ENCODE measurements at regions of chr6 and their contacts with region 1.

Region 1: GRCh38 chr6:43013843-43014433 is at the starts of genes KLHDC3 and MEA1:
- DNase-seq: peak; percentile 94
- ATAC-seq: peak; percentile 93
- H3K4me3 Mint-ChIP-seq: peak within 1 kb of the TSS; percentile 97
- H3K27ac Mint-ChIP-seq: peak within 1 kb of the TSS; percentile 89
- H3K4me1 Mint-ChIP-seq: peaks cover 51% of the 10 kb centered on the region
- H3K27me3 Mint-ChIP-seq: no peaks in the 10 kb centered on the region
- CTCF ChIP-seq: no peak
- total RNA-seq, gene KLHDC3: 36.4 and 36.7 TPM in 2 replicates
- total RNA-seq, gene MEA1: 44.4 and 48.3 TPM in 2 replicates

Region 2: GRCh38 chr6:42726485-42727086 is 287.4 kb before region 1 on chr6:
- CTCF ChIA-PET with region 1: no interaction called
- POLR2A ChIA-PET with region 1: no interaction called
- intact Hi-C with region 1: loop called (anchors 5 kb)
- DNase-seq: no peak
- ATAC-seq: peak; percentile 98
- H3K4me3 Mint-ChIP-seq: peak overlapping the region; percentile 89
- H3K27ac Mint-ChIP-seq: peak overlapping the region; percentile 96
- H3K4me1 Mint-ChIP-seq: peaks cover 19% of the 10 kb centered on the region
- H3K27me3 Mint-ChIP-seq: no peaks in the 10 kb centered on the region
- CTCF ChIP-seq: peak; percentile 84

Region 3: GRCh38 chr6:42978839-42979522 is 35.0 kb before region 1 on chr6 and contains the start of gene PEX6:
- CTCF ChIA-PET with region 1: interaction called, 3 read pairs
- POLR2A ChIA-PET with region 1: interaction called, 29 read pairs
- intact Hi-C with region 1: loop called (anchors 1 kb)
- DNase-seq: peak; percentile 74
- ATAC-seq: peak; percentile 94
- H3K4me3 Mint-ChIP-seq: peak within 1 kb of the TSS; percentile 93
- H3K27ac Mint-ChIP-seq: peak within 1 kb of the TSS; percentile 95
- H3K4me1 Mint-ChIP-seq: peaks cover 36% of the 10 kb centered on the region
- H3K27me3 Mint-ChIP-seq: no peaks in the 10 kb centered on the region
- CTCF ChIP-seq: no peak
- total RNA-seq, gene PEX6: 11.8 and 13.2 TPM in 2 replicates

Region 4: DNA sequence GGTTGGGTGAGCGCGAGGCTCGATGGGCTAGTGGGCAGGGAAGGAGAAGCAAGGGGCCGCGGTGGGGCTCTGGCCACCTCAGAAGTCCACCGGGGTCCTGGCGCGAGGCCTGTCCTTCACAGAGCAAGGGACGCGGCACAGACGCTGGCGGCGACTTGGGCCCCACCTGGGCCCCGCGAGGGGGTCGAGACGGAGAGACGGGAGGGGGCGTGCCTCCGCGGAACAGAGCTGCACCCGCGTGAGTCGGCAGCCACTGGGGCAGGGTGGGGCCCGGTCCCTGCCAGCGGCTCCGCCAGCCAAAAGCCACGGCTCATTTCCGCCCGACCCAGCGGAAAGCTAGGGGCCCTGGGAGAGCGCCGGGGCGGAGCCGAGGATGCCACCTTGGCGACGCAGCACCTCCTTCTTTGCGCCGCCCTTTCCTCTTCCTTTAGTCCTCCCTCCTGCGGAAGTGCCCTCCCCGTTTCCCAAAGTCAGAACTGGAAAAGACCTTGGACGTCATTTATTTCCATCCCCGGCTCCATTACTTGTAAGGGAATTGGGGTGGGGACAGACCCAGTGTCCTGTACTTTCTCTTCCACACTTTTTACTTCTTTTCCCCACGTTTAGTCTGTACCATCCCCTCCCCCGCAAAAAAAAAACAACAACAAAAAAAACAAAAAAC is 39.7 kb after region 1 on chr6 and contains the start of gene CUL7:
- CTCF ChIA-PET with region 1: no interaction called
- POLR2A ChIA-PET with region 1: interaction called, 20 read pairs
- intact Hi-C with region 1: loop called (anchors 1 kb)
- DNase-seq: peak; percentile 81
- ATAC-seq: peak; percentile 99
- H3K4me3 Mint-ChIP-seq: peak within 1 kb of the TSS; percentile 90
- H3K27ac Mint-ChIP-seq: peak within 1 kb of the TSS; percentile 90
- H3K4me1 Mint-ChIP-seq: peaks cover 37% of the 10 kb centered on the region
- H3K27me3 Mint-ChIP-seq: no peaks in the 10 kb centered on the region
- CTCF ChIP-seq: no peak
- total RNA-seq, gene CUL7: 15.9 and 19.1 TPM in 2 replicates

Region 5: GRCh38 chr6:43143235-43144124 is 129.5 kb after region 1 on chr6:
- CTCF ChIA-PET with region 1: interaction called, 12 read pairs
- POLR2A ChIA-PET with region 1: no interaction called
- intact Hi-C with region 1: loop called (anchors 1 kb)
- DNase-seq: peak; percentile 70
- ATAC-seq: peak; percentile 99
- H3K4me3 Mint-ChIP-seq: peak overlapping the region; percentile 39
- H3K27ac Mint-ChIP-seq: no peak overlapping the region
- H3K4me1 Mint-ChIP-seq: peaks cover 4% of the 10 kb centered on the region
- H3K27me3 Mint-ChIP-seq: peaks cover 4% of the 10 kb centered on the region
- CTCF ChIP-seq: no peak

Region 6: GRCh38 chr6:43516697-43517504 is 503.0 kb after region 1 on chr6 and contains the starts of genes POLR1C and YIPF3:
- CTCF ChIA-PET with region 1: no interaction called
- POLR2A ChIA-PET with region 1: interaction called, 3 read pairs
- intact Hi-C with region 1: loop called (anchors 2 kb)
- DNase-seq: peak; percentile 87
- ATAC-seq: peak; percentile 94
- H3K4me3 Mint-ChIP-seq: no peak within 1 kb of the TSS
- H3K27ac Mint-ChIP-seq: peak within 1 kb of the TSS; percentile 54
- H3K4me1 Mint-ChIP-seq: peaks cover 29% of the 10 kb centered on the region
- H3K27me3 Mint-ChIP-seq: no peaks in the 10 kb centered on the region
- CTCF ChIP-seq: no peak
- total RNA-seq, gene POLR1C: 67.7 and 75.6 TPM in 2 replicates
- total RNA-seq, gene YIPF3: 51.7 and 59.1 TPM in 2 replicates